ENCODE measurements at regions of chr7 and their contacts with region 1.

Region 1: GRCh38 chr7:98315341-98315983 is 34.0 kb downstream of the BRI3 start:
- DNase-seq: peak; percentile 70
- CTCF ChIP-seq: no peak

Region 2: GRCh38 chr7:98157761-98158160 is 157.7 kb before region 1 on chr7:
- in situ Hi-C with region 1: no loop called
- DNase-seq: no peak
- CTCF ChIP-seq: no peak

Region 3: DNA sequence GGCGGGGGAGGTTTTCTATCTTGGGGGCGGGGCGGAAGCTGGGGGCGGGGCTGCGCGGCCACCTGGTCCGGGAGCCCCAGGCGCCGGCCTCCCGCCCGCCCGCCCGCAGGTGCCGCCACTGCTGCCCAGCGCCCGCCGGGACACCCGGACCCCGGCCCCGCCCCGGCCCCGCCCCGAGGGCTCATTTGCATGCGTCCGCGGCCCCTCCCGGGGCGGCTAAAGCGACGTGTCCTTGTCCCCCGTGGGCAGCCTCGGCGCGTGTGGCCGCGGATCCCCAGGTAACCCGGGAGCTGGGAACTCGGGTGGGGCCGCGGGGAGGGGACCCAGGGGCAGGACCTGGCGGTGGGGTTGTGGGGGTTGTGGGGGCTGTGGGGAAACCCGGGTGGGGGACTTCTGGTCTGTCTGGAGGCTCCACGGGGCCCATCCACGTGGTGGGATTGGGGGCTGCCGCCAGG is 104.2 kb before region 1 on chr7 and contains the start of gene BHLHA15:
- in situ Hi-C with region 1: no loop called
- DNase-seq: peak; percentile 82
- CTCF ChIP-seq: no peak

Region 4: DNA sequence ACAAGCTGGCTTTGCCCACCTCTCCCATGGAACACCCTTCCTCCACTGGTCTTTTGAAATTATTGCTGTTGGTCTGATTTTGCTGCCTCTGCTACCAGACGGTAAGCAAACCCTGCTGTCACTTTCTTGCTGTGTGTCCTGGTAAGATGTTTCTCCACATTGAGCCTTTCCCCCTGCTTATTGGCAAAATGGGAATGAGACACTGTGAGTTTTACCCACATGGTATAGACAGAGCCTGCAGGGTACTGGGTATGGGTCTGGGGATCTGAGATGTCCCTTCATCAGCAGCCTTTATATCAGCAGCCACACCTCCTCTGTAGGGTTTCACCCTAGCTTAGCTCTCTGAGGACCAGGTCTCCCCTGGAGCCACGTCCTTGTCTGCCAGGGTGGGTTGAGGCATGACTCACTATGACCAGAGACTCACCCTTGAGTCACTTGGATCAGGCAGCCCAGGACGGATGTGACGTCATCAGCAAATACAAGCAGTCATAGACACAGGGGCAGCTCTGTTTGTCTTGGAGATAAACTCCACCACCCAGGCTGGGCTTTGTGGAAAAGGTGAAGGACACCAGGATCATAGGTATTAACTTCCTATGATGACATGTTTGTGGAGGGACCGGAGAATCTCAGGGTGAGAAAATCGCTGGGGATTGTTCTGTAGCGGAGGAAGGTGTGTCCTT is 103.3 kb after region 1 on chr7:
- in situ Hi-C with region 1: loop called (anchors 10 kb)
- DNase-seq: no peak
- CTCF ChIP-seq: no peak

Region 5: DNA sequence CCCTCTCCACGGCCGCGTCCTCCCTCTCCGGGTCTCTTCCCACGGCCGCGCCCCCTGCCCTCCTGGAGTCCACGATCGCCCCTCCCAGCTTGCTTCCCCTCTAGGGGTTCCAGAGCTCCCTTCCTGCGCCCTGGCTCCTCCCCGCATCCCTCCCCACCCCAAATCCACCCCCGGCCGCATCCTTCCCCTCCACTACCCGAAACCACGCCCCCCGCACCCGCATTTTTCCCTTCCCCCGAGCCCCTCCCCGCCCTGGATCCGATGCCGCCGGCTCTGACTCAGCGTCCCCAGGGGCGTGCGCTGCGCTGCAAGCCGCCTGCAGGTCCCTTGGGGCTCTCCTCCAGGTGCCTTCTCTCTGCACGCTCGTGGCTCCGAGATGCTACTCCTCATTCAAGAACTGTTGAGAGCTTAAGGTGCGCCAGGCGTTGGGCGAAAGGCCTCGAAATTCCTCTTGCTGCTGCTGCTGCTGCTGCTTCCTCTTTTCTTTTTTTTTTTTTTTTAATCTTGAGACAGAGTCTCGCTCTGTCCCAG is 554.7 kb after region 1 on chr7:
- in situ Hi-C with region 1: loop called (anchors 25 kb)
- DNase-seq: peak; percentile 79
- CTCF ChIP-seq: no peak